AG04450 (cell line): ENCODE measurements at regions of chr12 and their contacts with region 1.

Region 1: DNA sequence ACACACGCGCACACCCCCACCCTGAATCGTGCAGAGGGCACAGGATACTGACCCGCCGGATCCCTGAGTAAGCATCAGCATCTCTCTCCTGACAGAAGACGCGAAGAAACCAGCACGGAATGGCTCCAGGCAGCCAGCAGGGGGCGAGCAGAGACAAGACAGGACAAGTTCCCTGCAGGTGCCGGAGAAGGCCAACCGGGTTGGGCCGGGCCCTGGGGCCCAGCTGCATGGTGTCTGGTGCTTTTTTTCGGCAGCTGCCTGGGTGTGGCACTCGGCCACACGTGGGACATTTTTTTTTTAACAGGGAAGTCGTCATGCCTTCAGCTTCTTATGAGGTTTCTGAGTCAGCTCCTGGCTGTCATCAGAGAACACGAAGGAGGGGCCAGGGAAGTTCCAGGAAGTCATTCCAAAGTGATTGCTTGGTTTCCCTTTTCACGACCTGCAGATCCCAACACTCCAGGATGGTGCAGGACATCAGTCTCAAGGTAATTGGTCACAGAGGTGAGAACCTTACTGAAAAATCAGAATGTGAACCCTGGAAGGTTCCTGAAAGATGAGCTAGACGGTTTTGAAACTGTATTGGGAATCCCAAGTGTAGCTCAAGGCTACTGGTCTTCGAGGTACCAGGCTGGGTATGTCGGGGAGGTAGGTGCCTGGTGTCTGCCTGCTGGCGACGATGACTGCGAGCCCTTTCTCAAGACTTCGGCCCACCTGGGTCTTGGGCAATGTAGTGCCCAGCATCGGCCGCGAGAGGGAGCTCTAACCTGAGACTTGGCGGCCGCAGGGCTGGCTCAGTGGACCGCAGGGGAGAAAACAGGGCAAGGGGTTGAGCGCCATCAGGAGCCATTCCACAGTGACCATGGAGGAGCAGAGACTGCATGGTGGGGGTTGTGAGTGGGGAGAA is 190.8 kb upstream of the PRMT8 start:
- DNase-seq: peak; percentile 76
- H3K4me3 ChIP-seq: peak overlapping the region; percentile 46
- H3K27ac ChIP-seq: peak overlapping the region; percentile 93
- H3K27me3 ChIP-seq: no peaks in the 10 kb centered on the region
- CTCF ChIP-seq: peak; percentile 98

Region 2: GRCh38 chr12:3122835-3123678 is 177.1 kb before region 1 on chr12:
- CTCF ChIA-PET with region 1: interaction called, 10 read pairs
- POLR2A ChIA-PET with region 1: no interaction called
- DNase-seq: no peak
- H3K4me3 ChIP-seq: no peak overlapping the region
- H3K27ac ChIP-seq: peak overlapping the region; percentile 73
- H3K27me3 ChIP-seq: no peaks in the 10 kb centered on the region
- CTCF ChIP-seq: peak; percentile 33

Region 3: DNA sequence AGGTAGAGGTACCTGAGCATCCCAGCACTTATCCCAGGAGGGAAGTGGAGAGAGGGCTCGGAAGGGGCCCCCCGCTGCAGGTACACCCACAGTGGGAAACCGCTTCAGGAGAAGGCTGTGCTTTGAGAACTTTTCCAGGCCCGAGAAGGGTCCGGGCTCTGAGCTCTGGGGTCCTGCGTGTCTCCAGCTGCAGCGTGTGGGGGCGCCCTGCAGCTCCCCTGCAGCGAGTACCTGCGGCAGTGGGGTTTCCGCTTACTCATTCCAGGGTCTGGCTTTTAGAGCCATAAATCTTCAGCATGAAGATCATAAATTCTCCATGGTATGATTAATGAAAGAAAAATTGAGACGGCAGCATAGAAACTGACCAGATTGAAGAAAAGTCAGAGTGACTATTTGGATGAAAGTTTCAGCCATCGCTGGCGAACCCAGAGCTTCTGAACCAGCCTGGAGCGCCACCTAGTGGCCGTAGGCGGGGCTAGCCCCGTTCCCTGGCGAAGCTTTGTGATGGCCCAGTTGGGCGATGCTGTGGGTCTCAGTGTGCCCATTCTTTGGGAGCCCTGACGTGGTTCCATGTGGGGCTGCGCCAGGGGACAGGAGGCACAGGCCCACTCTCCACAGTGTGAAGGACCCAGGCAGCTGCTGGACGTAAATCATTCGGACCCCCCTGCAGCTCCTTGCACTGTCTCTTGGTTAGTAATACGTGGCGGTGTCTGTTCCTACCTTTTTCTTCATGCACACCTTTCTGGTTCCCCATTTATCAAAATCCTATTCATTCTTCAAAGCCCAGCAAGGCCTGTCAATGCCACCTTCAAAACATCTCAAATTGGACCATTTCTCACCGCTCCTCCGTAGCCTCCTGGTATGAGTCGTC is 24.8 kb before region 1 on chr12:
- CTCF ChIA-PET with region 1: interaction called, 14 read pairs
- POLR2A ChIA-PET with region 1: no interaction called
- DNase-seq: peak; percentile 36
- H3K4me3 ChIP-seq: no peak overlapping the region
- H3K27ac ChIP-seq: no peak overlapping the region
- H3K27me3 ChIP-seq: no peaks in the 10 kb centered on the region
- CTCF ChIP-seq: peak; percentile 98

Region 4: DNA sequence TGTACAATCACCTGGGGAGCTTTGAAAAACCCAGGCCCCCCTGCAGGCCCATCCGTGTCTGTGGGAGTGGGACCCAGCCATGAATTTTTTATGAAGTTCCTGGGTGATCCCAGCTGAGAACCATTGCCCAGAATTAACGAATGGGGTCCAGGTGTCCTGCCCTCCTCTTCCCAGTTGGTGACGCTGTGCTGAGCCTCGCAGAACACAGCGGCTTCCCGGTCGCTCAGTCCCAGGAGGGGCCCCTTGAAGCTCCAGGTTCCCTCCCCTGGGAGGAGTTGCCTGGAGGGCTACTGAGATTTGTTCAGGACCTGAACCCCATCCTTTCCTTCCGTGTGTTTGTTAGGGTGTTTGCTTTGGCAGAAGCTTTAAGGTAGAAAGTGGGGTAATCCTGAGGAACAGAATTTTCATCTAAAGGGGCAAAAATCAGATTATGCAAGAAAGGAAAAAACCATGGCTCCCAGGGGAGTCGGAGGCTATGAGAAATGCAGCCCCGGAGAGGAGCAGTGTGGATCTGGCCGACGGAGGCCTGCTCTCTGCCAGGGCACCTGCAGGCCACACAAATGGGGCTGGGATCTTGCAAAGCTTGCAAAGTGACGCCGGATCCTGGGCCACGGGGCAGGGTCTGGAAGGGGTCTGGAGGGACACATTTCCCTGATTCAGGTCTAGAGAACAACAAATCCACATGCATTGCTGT is 26.1 kb after region 1 on chr12:
- CTCF ChIA-PET with region 1: interaction called, 15 read pairs
- POLR2A ChIA-PET with region 1: no interaction called
- DNase-seq: no peak
- H3K4me3 ChIP-seq: no peak overlapping the region
- H3K27ac ChIP-seq: no peak overlapping the region
- H3K27me3 ChIP-seq: peaks cover 50% of the 10 kb centered on the region
- CTCF ChIP-seq: no peak

Region 5: DNA sequence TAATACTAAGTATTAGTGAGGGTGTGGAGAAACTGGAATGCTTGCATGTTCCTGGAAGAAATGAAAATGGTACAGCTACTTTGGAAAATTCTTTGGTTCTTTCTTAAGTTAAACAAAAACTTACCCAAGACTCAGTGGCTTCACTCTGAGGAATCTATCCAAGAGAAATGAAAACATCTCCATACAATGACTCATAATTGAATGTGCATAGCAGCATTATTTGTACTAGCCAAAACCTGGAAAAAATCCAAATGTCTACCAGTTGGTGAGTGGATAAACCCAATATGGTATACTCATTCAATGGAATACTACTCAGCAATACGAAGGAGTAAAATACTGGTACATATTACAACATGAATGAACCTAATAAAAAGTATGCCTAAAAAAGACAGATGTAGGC is 470.7 kb after region 1 on chr12:
- CTCF ChIA-PET with region 1: interaction called, 79 read pairs
- POLR2A ChIA-PET with region 1: no interaction called
- DNase-seq: no peak
- H3K4me3 ChIP-seq: no peak overlapping the region
- H3K27ac ChIP-seq: no peak overlapping the region
- H3K27me3 ChIP-seq: peaks cover 2% of the 10 kb centered on the region
- CTCF ChIP-seq: no peak

Region 6: GRCh38 chr12:3803865-3804472 is 503.8 kb after region 1 on chr12:
- CTCF ChIA-PET with region 1: interaction called, 226 read pairs
- POLR2A ChIA-PET with region 1: no interaction called
- DNase-seq: peak; percentile 29
- H3K4me3 ChIP-seq: no peak overlapping the region
- H3K27ac ChIP-seq: no peak overlapping the region
- H3K27me3 ChIP-seq: no peaks in the 10 kb centered on the region
- CTCF ChIP-seq: peak; percentile 93

Region 7: GRCh38 chr12:4483885-4484823 is 1184.0 kb after region 1 on chr12:
- CTCF ChIA-PET with region 1: no interaction called
- POLR2A ChIA-PET with region 1: no interaction called
- DNase-seq: no peak
- H3K4me3 ChIP-seq: no peak overlapping the region
- H3K27ac ChIP-seq: no peak overlapping the region
- H3K27me3 ChIP-seq: no peaks in the 10 kb centered on the region
- CTCF ChIP-seq: no peak